Calu3 (cell line): ENCODE measurements at regions of chr20 and their contacts with region 1.

Region 1: DNA sequence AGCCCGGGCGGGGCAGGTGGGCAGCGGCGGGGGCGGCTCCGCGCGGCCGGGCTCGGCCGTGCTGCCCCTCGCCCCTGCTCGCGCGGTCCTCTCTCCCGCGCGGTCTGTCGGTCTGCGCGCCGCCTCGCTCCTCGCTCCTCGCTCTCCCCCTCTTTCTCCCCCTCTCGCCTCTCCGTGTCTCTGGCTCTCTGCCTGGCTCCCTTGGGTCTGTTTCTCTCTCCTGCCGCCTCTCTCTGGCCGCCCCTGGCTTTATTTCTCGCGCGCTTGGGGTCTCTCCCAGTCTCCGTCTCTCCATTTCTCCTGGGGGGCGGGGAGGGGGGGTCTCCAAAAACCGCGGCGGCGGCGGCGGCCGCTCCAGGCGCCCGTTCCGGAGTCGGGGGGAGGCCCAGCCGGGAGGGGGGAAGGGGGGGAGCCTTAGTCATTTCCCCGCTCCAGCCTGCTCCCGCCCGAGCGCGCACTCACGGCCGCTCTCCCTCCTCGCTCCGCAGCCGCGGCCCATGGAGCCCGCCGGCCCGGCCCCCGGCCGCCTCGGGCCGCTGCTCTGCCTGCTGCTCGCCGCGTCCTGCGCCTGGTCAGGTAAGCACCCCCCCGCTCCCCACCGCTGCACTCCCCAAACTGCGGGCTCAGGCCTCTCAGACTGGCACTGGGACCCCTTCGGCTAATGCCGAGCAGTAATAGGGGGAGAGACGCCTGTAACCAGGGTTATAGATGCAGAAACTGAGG is at the start of gene SIRPA:
- DNase-seq: peak; percentile 28
- H3K4me3 Mint-ChIP-seq: peak within 1 kb of the TSS; percentile 87
- H3K27ac Mint-ChIP-seq: peak within 1 kb of the TSS; percentile 80
- H3K4me1 Mint-ChIP-seq: peaks cover 51% of the 10 kb centered on the region
- H3K27me3 Mint-ChIP-seq: no peaks in the 10 kb centered on the region
- CTCF ChIP-seq: no peak
- total RNA-seq, gene SIRPA: 24.0 and 28.3 TPM in 2 replicates

Region 2: DNA sequence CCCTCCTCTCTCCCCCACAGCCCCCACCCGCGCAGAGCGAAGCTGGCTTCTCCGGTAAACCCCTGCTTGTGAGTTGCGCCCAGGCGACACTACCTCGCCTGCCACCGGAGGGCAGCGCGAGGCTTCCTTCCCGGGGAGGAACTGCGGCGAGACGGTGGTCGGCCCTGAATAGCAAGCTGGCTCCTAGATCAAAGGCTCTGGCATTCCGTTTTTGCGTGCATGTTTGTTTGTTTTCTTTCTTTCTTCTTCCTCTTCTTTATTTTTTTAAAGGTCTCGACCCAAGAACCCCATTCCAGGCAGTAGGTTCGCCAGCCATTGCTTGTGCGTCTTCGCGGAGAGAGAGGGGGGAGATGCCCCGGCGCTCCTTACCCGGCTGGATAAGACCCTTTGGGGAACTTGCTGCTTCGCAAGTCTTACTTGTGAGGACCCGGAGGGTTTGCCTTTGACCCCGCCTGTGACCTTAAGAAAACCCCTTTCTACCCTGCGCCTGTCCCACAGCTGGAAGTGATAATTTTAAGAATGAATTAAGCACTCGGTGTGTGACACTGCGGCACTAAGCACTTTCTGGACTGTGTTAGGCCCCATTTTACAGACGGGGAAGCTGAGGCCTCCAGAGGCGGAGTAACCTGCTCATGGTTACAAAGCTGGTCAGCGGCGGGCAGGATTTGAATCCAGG is 92.6 kb before region 1 on chr20:
- CTCF ChIA-PET with region 1: interaction called, 3 read pairs
- intact Hi-C with region 1: loop called (anchors 5 kb)
- DNase-seq: peak; percentile 63
- H3K4me3 Mint-ChIP-seq: peak overlapping the region; percentile 75
- H3K27ac Mint-ChIP-seq: no peak overlapping the region
- H3K4me1 Mint-ChIP-seq: peaks cover 38% of the 10 kb centered on the region
- H3K27me3 Mint-ChIP-seq: no peaks in the 10 kb centered on the region
- CTCF ChIP-seq: no peak

Region 3: DNA sequence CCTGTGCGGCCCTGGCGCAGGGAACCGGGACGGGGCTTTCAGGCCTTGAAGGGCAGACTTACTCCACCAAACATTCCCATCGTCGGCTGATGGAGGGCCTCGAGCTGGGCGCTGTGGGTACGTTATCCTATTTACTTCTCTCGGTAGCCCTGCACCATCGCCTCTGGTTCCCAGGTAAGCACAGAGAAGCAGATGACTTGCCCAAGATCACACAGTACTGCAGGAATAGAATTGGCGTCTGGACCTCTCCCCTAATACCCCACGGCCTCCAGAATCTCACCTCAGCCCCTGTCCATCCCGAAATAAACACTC is 52.4 kb after region 1 on chr20:
- CTCF ChIA-PET with region 1: interaction called, 11 read pairs
- intact Hi-C with region 1: no loop called
- DNase-seq: no peak
- H3K4me3 Mint-ChIP-seq: peak overlapping the region; percentile 49
- H3K27ac Mint-ChIP-seq: no peak overlapping the region
- H3K4me1 Mint-ChIP-seq: no peaks in the 10 kb centered on the region
- H3K27me3 Mint-ChIP-seq: no peaks in the 10 kb centered on the region
- CTCF ChIP-seq: no peak

Region 4: GRCh38 chr20:2162125-2162822 is 267.2 kb after region 1 on chr20:
- CTCF ChIA-PET with region 1: interaction called, 12 read pairs
- intact Hi-C with region 1: no loop called
- DNase-seq: no peak
- H3K4me3 Mint-ChIP-seq: no peak overlapping the region
- H3K27ac Mint-ChIP-seq: no peak overlapping the region
- H3K4me1 Mint-ChIP-seq: no peaks in the 10 kb centered on the region
- H3K27me3 Mint-ChIP-seq: peaks cover 33% of the 10 kb centered on the region
- CTCF ChIP-seq: no peak